ENCODE measurements at regions of chr19 and their contacts with region 1.

Region 1: DNA sequence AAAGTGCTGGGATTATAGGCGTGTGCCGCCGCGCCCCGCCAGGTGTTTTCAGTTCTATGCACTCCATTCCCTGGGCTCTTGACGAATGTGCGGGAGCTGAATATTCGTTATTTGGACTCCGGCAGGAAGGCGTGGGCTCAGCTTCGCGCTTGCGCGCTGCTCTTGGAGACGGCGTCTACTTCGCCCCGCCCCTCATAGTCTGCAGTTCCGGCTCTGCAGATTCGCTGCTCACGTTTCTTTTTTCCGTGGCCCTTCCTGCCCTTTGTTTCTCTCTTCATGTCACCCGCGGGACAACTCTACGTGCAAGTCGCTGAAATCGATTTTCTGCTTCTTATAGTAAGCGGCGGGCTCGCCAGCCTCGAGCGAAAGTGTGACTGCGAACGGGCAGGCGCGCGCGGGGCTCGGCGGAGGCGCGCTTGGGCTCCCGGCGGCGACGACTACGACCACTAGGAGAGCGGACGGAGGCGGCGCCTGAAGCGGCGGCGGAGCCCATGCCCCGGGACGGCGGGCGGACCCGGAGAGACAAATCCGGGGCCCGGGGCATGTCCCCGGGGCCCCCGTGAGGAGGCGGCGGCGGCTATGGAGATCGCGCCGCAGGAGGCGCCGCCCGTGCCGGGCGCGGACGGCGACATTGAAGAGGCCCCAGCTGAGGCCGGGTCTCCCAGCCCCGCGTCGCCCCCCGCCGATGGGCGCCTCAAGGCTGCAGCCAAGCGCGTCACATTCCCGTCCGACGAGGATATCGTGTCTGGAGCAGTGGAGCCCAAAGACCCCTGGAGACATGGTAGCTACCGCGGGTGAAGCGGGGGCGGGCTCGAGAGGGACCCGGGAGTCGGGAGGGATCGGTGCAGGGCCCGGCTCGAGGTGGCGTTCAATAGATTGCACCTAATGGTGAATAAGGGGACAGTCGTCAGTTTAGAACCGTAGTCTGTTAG is at the start of gene PPP1R37:
- DNase-seq: peak; percentile 99 to 100
- ATAC-seq: peak; percentile 78 to 84
- H3K4me3 ChIP-seq: peak within 1 kb of the TSS; percentile 86
- H3K27ac ChIP-seq: peak within 1 kb of the TSS; percentile 92 to 94
- H3K4me1 ChIP-seq: peaks cover 46% of the 10 kb centered on the region
- CTCF ChIP-seq: peak; percentile 18; the same call in 2 of the 3 replicates
- EP300 ChIP-seq: no peak
- POLR2A ChIP-seq: peak; percentile 35
- RAD21 ChIP-seq: 0 out of 5 replicates have a peak, but pooled peaks of 1 of the 2 experiments have one; percentile 10
- polyA plus RNA-seq, gene PPP1R37: 7.6 and 9.1 TPM in 2 replicates

Region 2: GRCh38 chr19:45038931-45039893 is 53.8 kb before region 1 on chr19 and contains the start of gene CLASRP:
- CTCF ChIA-PET with region 1: interaction called, 4 read pairs
- POLR2A ChIA-PET with region 1: interaction called, 12 read pairs
- DNase-seq: peak; percentile 90 to 92
- ATAC-seq: peak; percentile 99
- H3K4me3 ChIP-seq: peak within 1 kb of the TSS; percentile 72
- H3K27ac ChIP-seq: peak within 1 kb of the TSS; percentile 85 to 90
- H3K4me1 ChIP-seq: peaks cover 11% of the 10 kb centered on the region
- CTCF ChIP-seq: no peak
- EP300 ChIP-seq: no peak
- POLR2A ChIP-seq: peak; percentile 92
- RAD21 ChIP-seq: no peak
- polyA plus RNA-seq, gene CLASRP: 30.7 and 39.0 TPM in 2 replicates

Region 3: DNA sequence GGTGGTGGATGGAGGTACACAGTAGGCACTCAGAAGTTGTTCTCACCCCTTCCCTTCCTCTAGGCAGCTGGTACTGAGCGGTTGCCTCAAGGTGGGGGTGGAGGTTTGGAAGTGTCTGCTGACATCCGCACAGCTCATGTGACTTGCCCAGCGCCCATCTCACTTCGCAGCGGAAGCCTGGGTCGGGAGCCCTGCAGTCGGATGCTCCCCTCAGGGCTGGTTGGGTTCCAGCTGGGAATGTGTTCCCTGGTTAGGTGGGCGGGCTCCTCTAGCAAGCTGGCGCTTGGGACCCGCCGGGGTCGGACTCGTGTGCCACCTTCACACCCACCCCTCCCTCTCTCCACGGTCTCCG is 10.1 kb after region 1 on chr19:
- CTCF ChIA-PET with region 1: interaction called, 20 read pairs
- POLR2A ChIA-PET with region 1: interaction called, 4 read pairs
- DNase-seq: no peak
- ATAC-seq: no peak
- H3K4me3 ChIP-seq: no peak overlapping the region
- H3K27ac ChIP-seq: no peak overlapping the region
- H3K4me1 ChIP-seq: peaks cover 29% of the 10 kb centered on the region
- CTCF ChIP-seq: no peak
- EP300 ChIP-seq: no peak
- POLR2A ChIP-seq: no peak
- RAD21 ChIP-seq: no peak

Region 4: GRCh38 chr19:45125926-45126493 is 33.0 kb after region 1 on chr19:
- CTCF ChIA-PET with region 1: interaction called, 46 read pairs
- POLR2A ChIA-PET with region 1: interaction called, 6 read pairs
- DNase-seq: peak; percentile 65 to 76
- ATAC-seq: peak; percentile 84 to 93
- H3K4me3 ChIP-seq: no peak overlapping the region
- H3K27ac ChIP-seq: no peak overlapping the region
- H3K4me1 ChIP-seq: peaks cover 10% of the 10 kb centered on the region
- CTCF ChIP-seq: peak; percentile 75
- EP300 ChIP-seq: no peak
- POLR2A ChIP-seq: no peak
- RAD21 ChIP-seq: peak; percentile 67 to 68

Region 5: GRCh38 chr19:45178262-45179071 is 85.5 kb after region 1 on chr19 and contains the start of gene BLOC1S3:
- CTCF ChIA-PET with region 1: interaction called, 3 read pairs
- POLR2A ChIA-PET with region 1: interaction called, 23 read pairs
- DNase-seq: peak; percentile 100
- ATAC-seq: peak; percentile 87 to 94
- H3K4me3 ChIP-seq: peak within 1 kb of the TSS; percentile 71
- H3K27ac ChIP-seq: peak within 1 kb of the TSS; percentile 76 to 85
- H3K4me1 ChIP-seq: peaks cover 11% of the 10 kb centered on the region; the same call in 2 of the 3 replicates
- CTCF ChIP-seq: no peak; the same call in 2 of the 3 replicates
- EP300 ChIP-seq: no peak
- POLR2A ChIP-seq: peak; percentile 76
- RAD21 ChIP-seq: peak in 1 of 2 experiments; percentile 6; a peak in 1 of 5 replicates
- polyA plus RNA-seq, gene BLOC1S3: 7.5 and 10.5 TPM in 2 replicates

Region 6: GRCh38 chr19:45200568-45200994 is 107.6 kb after region 1 on chr19:
- CTCF ChIA-PET with region 1: no interaction called
- POLR2A ChIA-PET with region 1: no interaction called
- DNase-seq: peak in 1 of 2 experiments; percentile 74
- ATAC-seq: peak; percentile 63 to 84; a peak in 4 of 6 replicates
- H3K4me3 ChIP-seq: no peak overlapping the region
- H3K27ac ChIP-seq: no peak overlapping the region
- H3K4me1 ChIP-seq: peaks cover 5% of the 10 kb centered on the region; the same call in 1 of the 3 replicates
- CTCF ChIP-seq: peak; percentile 48
- EP300 ChIP-seq: no peak
- POLR2A ChIP-seq: no peak
- RAD21 ChIP-seq: peak; percentile 63 to 82

Region 7: GRCh38 chr19:45215383-45216191 is 122.6 kb after region 1 on chr19:
- CTCF ChIA-PET with region 1: no interaction called
- POLR2A ChIA-PET with region 1: no interaction called
- DNase-seq: no peak
- ATAC-seq: no peak
- H3K4me3 ChIP-seq: no peak overlapping the region
- H3K27ac ChIP-seq: no peak overlapping the region
- H3K4me1 ChIP-seq: peaks cover 4% of the 10 kb centered on the region; the same call in 1 of the 3 replicates
- CTCF ChIP-seq: no peak
- EP300 ChIP-seq: no peak
- POLR2A ChIP-seq: no peak
- RAD21 ChIP-seq: no peak